ENCODE measurements at regions of chr17 and their contacts with region 1.

Region 1: GRCh38 chr17:51298508-51299371 is 38.4 kb downstream of the UTP18 start:
- DNase-seq: no peak
- H3K4me3 ChIP-seq: no peak overlapping the region
- H3K27ac ChIP-seq: no peak overlapping the region
- H3K4me1 ChIP-seq: peaks cover 0 to 11% (median 3%) of the 10 kb centered on the region in 4 experiments; a peak in 2 of 7 replicates
- H3K27me3 ChIP-seq: no peaks in the 10 kb centered on the region
- CTCF ChIP-seq: peak in 2 of 3 experiments; percentile 68 to 83; a peak in 3 of 4 replicates
- EP300 ChIP-seq: no peak
- POLR2A ChIP-seq: 0 out of 3 replicates have a peak, but pooled peaks of 1 of the 2 experiments have one; percentile 8
- RAD21 ChIP-seq: peak; percentile 80 to 87

Region 2: GRCh38 chr17:51228161-51228560 is 70.6 kb before region 1 on chr17:
- CTCF ChIA-PET with region 1: no interaction called
- POLR2A ChIA-PET with region 1: no interaction called
- DNase-seq: no peak
- H3K4me3 ChIP-seq: no peak overlapping the region
- H3K27ac ChIP-seq: no peak overlapping the region
- H3K4me1 ChIP-seq: no peaks in the 10 kb centered on the region
- H3K27me3 ChIP-seq: no peaks in the 10 kb centered on the region
- CTCF ChIP-seq: no peak
- EP300 ChIP-seq: no peak
- POLR2A ChIP-seq: no peak
- RAD21 ChIP-seq: no peak

Region 3: GRCh38 chr17:51322390-51323029 is 23.8 kb after region 1 on chr17:
- CTCF ChIA-PET with region 1: interaction called, 42 read pairs
- POLR2A ChIA-PET with region 1: no interaction called
- DNase-seq: no peak
- H3K4me3 ChIP-seq: no peak overlapping the region
- H3K27ac ChIP-seq: no peak overlapping the region
- H3K4me1 ChIP-seq: peaks cover 0 to 2% (median 0%) of the 10 kb centered on the region in 4 experiments; a peak in 2 of 7 replicates
- H3K27me3 ChIP-seq: no peaks in the 10 kb centered on the region
- CTCF ChIP-seq: peak in 2 of 3 experiments; percentile 99; a peak in 3 of 4 replicates
- EP300 ChIP-seq: no peak
- POLR2A ChIP-seq: no peak
- RAD21 ChIP-seq: peak; percentile 91 to 95

Measured in H1 (cell line).